Naive thymus-derived CD4-positive, alpha-beta T cell (primary cell): ENCODE measurements at regions of chr17 and their contacts with region 1.

Region 1: DNA sequence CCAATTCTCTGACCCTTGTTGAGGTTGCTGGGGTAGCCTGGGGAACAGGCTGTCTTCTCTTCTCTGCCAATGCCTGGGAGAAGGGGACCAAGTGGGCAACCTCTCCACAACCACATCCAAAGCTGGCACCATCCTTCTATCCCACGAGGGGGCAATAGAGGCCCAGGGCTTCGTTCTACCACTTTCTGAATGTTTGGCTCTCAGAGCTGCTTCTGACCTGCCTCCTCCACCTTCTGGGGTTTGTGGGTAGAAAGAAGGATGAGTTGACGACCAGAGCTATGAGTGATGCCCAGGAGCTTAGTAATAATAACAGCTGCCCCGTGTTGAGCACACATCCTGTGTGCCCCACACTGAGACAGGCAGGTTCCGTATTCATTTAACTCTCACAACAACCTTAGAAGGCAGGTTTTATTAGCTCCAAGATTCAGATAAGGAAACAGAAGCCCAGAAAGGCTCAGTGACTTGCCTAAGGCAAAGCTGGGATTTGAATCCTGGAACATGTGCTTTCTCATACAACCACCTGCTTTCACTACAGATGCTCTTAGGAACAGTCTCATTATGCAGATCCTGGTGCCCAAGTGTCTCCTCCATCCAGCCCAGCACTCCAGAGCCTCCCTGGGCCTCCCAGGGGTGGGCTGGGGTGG is 11.1 kb downstream of the TSPOAP1 start:
- DNase-seq: peak; percentile 44 to 83 (median 77)
- ATAC-seq: peak; percentile 95
- H3K4me3 ChIP-seq: no peak overlapping the region
- H3K4me3 Mint-ChIP-seq: peak overlapping the region in 4 of 10 donors; percentile 4 to 58 (median 28)
- H3K27ac ChIP-seq: peak overlapping the region; percentile 47
- H3K27ac Mint-ChIP-seq: peak overlapping the region; percentile 58 to 94 (median 84)
- H3K4me1 ChIP-seq: peaks cover 11 to 12% of the 10 kb centered on the region in 2 donors
- H3K4me1 Mint-ChIP-seq: peaks cover 10 to 26% (median 13%) of the 10 kb centered on the region in 7 donors
- H3K27me3 ChIP-seq: no peaks in the 10 kb centered on the region
- H3K27me3 Mint-ChIP-seq: no peaks in the 10 kb centered on the region

Region 2: DNA sequence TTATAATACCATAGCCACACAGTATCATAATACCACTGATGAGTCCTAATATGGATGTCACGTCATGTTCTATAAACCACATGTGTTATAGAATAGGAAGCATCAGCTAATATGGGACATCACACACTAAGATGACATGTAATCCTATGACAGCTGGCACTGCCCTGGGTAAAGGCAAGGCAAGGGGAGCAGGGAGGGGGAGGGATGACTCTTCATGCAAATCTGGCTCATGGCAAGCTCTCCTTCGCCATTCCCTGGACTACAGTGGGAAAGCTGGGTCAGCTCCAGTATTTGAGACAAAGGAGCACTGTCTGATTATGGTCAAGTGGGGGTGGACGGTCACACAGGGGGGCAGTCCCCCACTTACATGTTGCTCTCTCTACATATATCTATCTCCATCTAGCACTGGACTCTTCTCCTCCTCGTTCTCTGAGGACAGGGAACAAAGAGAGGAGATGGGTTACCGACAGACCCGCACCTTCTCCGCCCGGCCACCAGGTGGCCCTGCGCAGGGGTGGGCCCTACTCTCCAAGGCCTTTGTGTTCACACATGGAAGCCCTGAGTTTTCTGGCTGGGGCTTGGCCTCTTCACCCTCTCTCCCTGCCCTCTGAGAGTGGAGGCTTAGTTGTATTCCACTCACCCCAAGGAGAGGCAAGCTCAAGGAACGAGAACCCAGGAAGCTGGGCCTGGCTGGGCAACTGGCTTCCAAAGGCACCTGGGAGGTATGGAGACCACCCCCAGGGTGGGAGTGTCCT is 13.4 kb before region 1 on chr17:
- CTCF ChIA-PET with region 1: interaction called, 16 read pairs
- POLR2A ChIA-PET with region 1: interaction called, 5 read pairs
- intact Hi-C with region 1: no loop called
- DNase-seq: peak in 8 of 9 donors; percentile 32 to 63 (median 53)
- ATAC-seq: peak; percentile 89
- H3K4me3 ChIP-seq: no peak overlapping the region
- H3K4me3 Mint-ChIP-seq: peak overlapping the region in 1 of 10 donors; percentile 38
- H3K27ac ChIP-seq: no peak overlapping the region
- H3K27ac Mint-ChIP-seq: peak overlapping the region in 1 of 9 donors; percentile 46
- H3K4me1 ChIP-seq: peaks cover 0 to 6% of the 10 kb centered on the region in 2 donors
- H3K4me1 Mint-ChIP-seq: peaks cover 0 to 7% (median 4%) of the 10 kb centered on the region in 7 donors
- H3K27me3 ChIP-seq: no peaks in the 10 kb centered on the region
- H3K27me3 Mint-ChIP-seq: peaks cover 0 to 5% (median 0%) of the 10 kb centered on the region in 5 donors

Region 3: GRCh38 chr17:58329035-58329809 is 11.7 kb after region 1 on chr17:
- CTCF ChIA-PET with region 1: interaction called, 31 read pairs
- POLR2A ChIA-PET with region 1: interaction called, 792 read pairs
- intact Hi-C with region 1: loop called (anchors 1 kb)
- DNase-seq: peak in 8 of 9 donors; percentile 52 to 83 (median 62)
- ATAC-seq: peak; percentile 62
- H3K4me3 ChIP-seq: peak overlapping the region; percentile 64
- H3K4me3 Mint-ChIP-seq: peak overlapping the region; percentile 86 to 100 (median 94)
- H3K27ac ChIP-seq: peak overlapping the region; percentile 98
- H3K27ac Mint-ChIP-seq: peak overlapping the region; percentile 91 to 98 (median 94)
- H3K4me1 ChIP-seq: peaks cover 4 to 18% of the 10 kb centered on the region in 2 donors
- H3K4me1 Mint-ChIP-seq: peaks cover 37 to 61% (median 50%) of the 10 kb centered on the region in 7 donors
- H3K27me3 ChIP-seq: no peaks in the 10 kb centered on the region
- H3K27me3 Mint-ChIP-seq: peaks cover 0 to 19% (median 0%) of the 10 kb centered on the region in 5 donors

Region 4: GRCh38 chr17:58337600-58338453 is 20.3 kb after region 1 on chr17:
- CTCF ChIA-PET with region 1: interaction called, 257 read pairs
- POLR2A ChIA-PET with region 1: interaction called, 792 read pairs
- intact Hi-C with region 1: no loop called
- DNase-seq: peak; percentile 73 to 93 (median 85)
- ATAC-seq: peak; percentile 88
- H3K4me3 ChIP-seq: peak overlapping the region; percentile 98
- H3K4me3 Mint-ChIP-seq: peak overlapping the region; percentile 86 to 100 (median 97)
- H3K27ac ChIP-seq: peak overlapping the region; percentile 98
- H3K27ac Mint-ChIP-seq: peak overlapping the region; percentile 89 to 100 (median 95)
- H3K4me1 ChIP-seq: peaks cover 59 to 77% of the 10 kb centered on the region in 2 donors
- H3K4me1 Mint-ChIP-seq: peaks cover 52 to 90% (median 65%) of the 10 kb centered on the region in 7 donors
- H3K27me3 ChIP-seq: no peaks in the 10 kb centered on the region
- H3K27me3 Mint-ChIP-seq: no peaks in the 10 kb centered on the region

Region 5: DNA sequence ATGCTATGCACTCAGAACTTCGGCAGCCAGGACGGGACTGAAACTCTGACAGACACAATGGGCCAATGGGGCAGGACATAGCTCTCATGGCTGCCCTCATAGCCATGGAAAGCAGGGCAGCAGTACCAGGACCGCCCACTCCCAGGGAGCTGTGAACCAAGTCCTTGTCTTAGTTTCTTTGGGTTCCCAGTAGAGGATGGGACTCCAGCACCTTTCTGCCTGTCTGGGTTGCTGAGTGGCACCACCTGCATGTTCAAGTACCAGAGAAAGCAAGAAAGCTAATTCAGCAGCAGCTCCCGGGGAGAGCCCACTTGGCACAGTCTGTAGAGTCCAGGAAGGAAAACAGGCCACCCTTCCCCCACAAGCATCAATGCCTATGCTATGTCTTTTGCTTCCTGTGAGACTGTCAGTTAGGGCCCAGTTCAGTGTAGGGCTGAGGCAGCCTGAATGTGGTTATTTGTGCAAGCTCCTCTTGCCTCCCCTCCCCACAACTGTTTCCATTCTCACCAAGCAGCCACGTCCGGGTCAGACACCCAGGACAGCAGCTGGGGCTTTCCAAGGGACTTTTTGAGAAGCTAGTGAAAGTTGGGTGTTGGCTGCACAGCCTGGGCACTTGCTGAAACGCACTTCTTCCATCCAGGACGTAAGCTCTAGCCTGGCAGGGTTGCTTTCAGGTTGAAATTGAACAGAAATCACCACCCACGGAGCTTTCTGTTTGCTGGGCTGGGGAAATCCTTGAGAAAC is 26.7 kb after region 1 on chr17:
- CTCF ChIA-PET with region 1: interaction called, 257 read pairs
- POLR2A ChIA-PET with region 1: interaction called, 792 read pairs
- intact Hi-C with region 1: loop called (anchors 1 kb)
- DNase-seq: peak; percentile 48 to 96 (median 80)
- ATAC-seq: peak; percentile 91
- H3K4me3 ChIP-seq: peak overlapping the region; percentile 64
- H3K4me3 Mint-ChIP-seq: peak overlapping the region; percentile 80 to 100 (median 88)
- H3K27ac ChIP-seq: peak overlapping the region; percentile 98
- H3K27ac Mint-ChIP-seq: peak overlapping the region; percentile 91 to 100 (median 95)
- H3K4me1 ChIP-seq: peaks cover 72 to 78% of the 10 kb centered on the region in 2 donors
- H3K4me1 Mint-ChIP-seq: peaks cover 54 to 100% (median 87%) of the 10 kb centered on the region in 7 donors
- H3K27me3 ChIP-seq: no peaks in the 10 kb centered on the region
- H3K27me3 Mint-ChIP-seq: no peaks in the 10 kb centered on the region

Region 6: GRCh38 chr17:58468944-58469343 is 151.4 kb after region 1 on chr17:
- CTCF ChIA-PET with region 1: no interaction called
- POLR2A ChIA-PET with region 1: no interaction called
- intact Hi-C with region 1: no loop called
- DNase-seq: no peak
- ATAC-seq: no peak
- H3K4me3 ChIP-seq: no peak overlapping the region
- H3K4me3 Mint-ChIP-seq: no peak overlapping the region
- H3K27ac ChIP-seq: no peak overlapping the region
- H3K27ac Mint-ChIP-seq: no peak overlapping the region
- H3K4me1 ChIP-seq: no peaks in the 10 kb centered on the region
- H3K4me1 Mint-ChIP-seq: no peaks in the 10 kb centered on the region
- H3K27me3 ChIP-seq: no peaks in the 10 kb centered on the region
- H3K27me3 Mint-ChIP-seq: peaks cover 0 to 3% (median 0%) of the 10 kb centered on the region in 5 donors

Region 7: GRCh38 chr17:58487589-58488427 is 170.3 kb after region 1 on chr17 and contains the start of gene HSF5:
- CTCF ChIA-PET with region 1: interaction called, 20 read pairs
- POLR2A ChIA-PET with region 1: interaction called, 7 read pairs
- intact Hi-C with region 1: loop called in 1 of 2 experiments (anchors 1 kb)
- DNase-seq: peak; percentile 60 to 85 (median 82)
- ATAC-seq: peak; percentile 94
- H3K4me3 ChIP-seq: peak within 1 kb of the TSS; percentile 60
- H3K4me3 Mint-ChIP-seq: peak within 1 kb of the TSS; percentile 50 to 79 (median 69)
- H3K27ac ChIP-seq: peak within 1 kb of the TSS; percentile 60
- H3K27ac Mint-ChIP-seq: peak within 1 kb of the TSS in 7 of 9 donors; percentile 45 to 83 (median 57)
- H3K4me1 ChIP-seq: peaks cover 5 to 10% of the 10 kb centered on the region in 2 donors
- H3K4me1 Mint-ChIP-seq: peaks cover 0 to 35% (median 16%) of the 10 kb centered on the region in 7 donors
- H3K27me3 ChIP-seq: no peaks in the 10 kb centered on the region
- H3K27me3 Mint-ChIP-seq: no peaks in the 10 kb centered on the region
- total RNA-seq, gene HSF5: 0.34 to 4.0 (median 3.1) TPM

Region 8: GRCh38 chr17:58913585-58914444 is 596.3 kb after region 1 on chr17:
- CTCF ChIA-PET with region 1: no interaction called
- POLR2A ChIA-PET with region 1: no interaction called
- intact Hi-C with region 1: no loop called
- DNase-seq: no peak
- ATAC-seq: no peak
- H3K4me3 ChIP-seq: no peak overlapping the region
- H3K4me3 Mint-ChIP-seq: no peak overlapping the region
- H3K27ac ChIP-seq: no peak overlapping the region
- H3K27ac Mint-ChIP-seq: no peak overlapping the region
- H3K4me1 ChIP-seq: no peaks in the 10 kb centered on the region
- H3K4me1 Mint-ChIP-seq: no peaks in the 10 kb centered on the region
- H3K27me3 ChIP-seq: peaks cover 0 to 4% of the 10 kb centered on the region in 2 donors
- H3K27me3 Mint-ChIP-seq: peaks cover 6 to 26% (median 22%) of the 10 kb centered on the region in 5 donors